Brain microvascular endothelial cell (primary cell): ENCODE measurements at regions of chr2 and their contacts with region 1.

Region 1: DNA sequence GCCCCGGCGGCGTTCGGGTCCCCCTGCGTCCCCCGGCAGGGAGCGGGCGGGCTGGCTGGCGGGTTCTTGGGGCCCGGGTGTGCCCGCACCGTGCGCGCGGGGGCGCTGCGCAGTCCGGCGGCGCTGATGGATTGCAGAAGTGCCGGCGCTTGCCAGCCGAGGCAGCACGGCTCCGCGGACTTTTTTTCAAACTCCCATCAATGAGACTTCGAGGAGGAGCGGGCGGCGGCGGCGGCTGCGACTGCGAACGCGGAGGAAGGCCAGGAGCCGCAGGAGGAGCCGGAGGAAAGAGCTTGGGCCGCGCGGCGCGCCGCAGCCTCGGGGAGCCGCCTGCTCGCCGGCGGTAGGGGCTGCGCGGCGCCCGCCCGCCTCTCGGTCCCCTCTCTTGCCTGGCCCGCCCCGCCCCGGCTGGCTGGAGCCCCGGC is at the start of gene GLI2:
- DNase-seq: peak; percentile 78
- H3K4me3 ChIP-seq: peak within 1 kb of the TSS; percentile 82
- H3K27ac ChIP-seq: peak within 1 kb of the TSS; percentile 79
- H3K27me3 ChIP-seq: no peaks in the 10 kb centered on the region
- CTCF ChIP-seq: peak; percentile 60

Region 2: GRCh38 chr2:120779781-120780283 is 44.1 kb after region 1 on chr2:
- in situ Hi-C with region 1: loop called (anchors 10 kb)
- DNase-seq: peak; percentile 86
- H3K4me3 ChIP-seq: no peak overlapping the region
- H3K27ac ChIP-seq: peak overlapping the region; percentile 51
- H3K27me3 ChIP-seq: no peaks in the 10 kb centered on the region
- CTCF ChIP-seq: peak; percentile 60

Region 3: GRCh38 chr2:120825370-120826259 is 89.9 kb after region 1 on chr2:
- in situ Hi-C with region 1: no loop called
- DNase-seq: peak; percentile 54
- H3K4me3 ChIP-seq: no peak overlapping the region
- H3K27ac ChIP-seq: no peak overlapping the region
- H3K27me3 ChIP-seq: no peaks in the 10 kb centered on the region
- CTCF ChIP-seq: no peak